ENCODE measurements at regions of chr18 and their contacts with region 1.

Region 1: DNA sequence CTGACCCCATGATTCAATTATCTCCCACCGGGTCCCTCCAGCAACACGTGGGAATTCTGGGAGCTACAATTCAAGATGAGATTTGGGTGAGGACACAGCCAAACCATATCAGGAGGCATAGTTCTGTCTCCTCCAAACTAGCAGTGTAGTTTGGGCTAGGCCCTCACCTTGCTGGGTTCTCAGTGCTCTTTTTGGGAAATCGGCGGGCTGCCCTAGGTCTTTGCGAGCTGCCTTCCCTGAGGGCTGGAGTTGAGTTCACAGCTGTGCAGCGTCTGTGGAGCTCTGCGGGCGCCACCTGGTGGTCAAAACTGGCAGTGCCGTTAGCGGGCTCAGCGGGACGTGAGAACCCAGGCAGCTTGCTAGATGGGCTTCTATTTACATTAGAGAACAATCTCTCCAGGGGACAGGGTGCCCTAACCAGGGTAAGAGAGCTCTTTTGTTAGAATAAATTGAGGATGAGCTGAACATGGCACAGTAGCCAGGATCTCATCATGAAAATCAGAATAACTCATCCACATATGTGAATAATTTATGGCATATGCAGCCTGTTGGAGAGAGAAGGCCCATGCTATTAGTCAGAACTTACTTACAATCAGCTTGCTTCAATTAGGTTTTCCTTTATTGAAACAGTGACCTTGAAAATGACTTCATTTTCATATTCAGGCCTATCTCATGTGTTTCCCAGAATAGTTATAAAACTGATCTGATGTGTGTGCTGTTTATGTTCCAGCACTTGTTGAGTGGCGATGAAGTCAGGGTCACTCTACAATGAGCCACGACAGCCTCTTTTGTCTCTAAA is 27.4 kb upstream of the YES1 start:
- DNase-seq: peak; percentile 49 to 91 (median 82)
- ATAC-seq: peak; percentile 91 to 99 (median 95)
- H3K4me3 ChIP-seq: no peak overlapping the region
- H3K4me3 Mint-ChIP-seq: no peak overlapping the region
- H3K27ac ChIP-seq: no peak overlapping the region
- H3K27ac Mint-ChIP-seq: no peak overlapping the region
- H3K4me1 ChIP-seq: peaks cover 0 to 3% of the 10 kb centered on the region in 2 experiments
- H3K4me1 Mint-ChIP-seq: peaks cover 7 to 8% (median 7%) of the 10 kb centered on the region in 3 donors
- H3K27me3 ChIP-seq: no peaks in the 10 kb centered on the region
- H3K27me3 Mint-ChIP-seq: peaks cover 0 to 1% of the 10 kb centered on the region in 2 donors

Region 2: DNA sequence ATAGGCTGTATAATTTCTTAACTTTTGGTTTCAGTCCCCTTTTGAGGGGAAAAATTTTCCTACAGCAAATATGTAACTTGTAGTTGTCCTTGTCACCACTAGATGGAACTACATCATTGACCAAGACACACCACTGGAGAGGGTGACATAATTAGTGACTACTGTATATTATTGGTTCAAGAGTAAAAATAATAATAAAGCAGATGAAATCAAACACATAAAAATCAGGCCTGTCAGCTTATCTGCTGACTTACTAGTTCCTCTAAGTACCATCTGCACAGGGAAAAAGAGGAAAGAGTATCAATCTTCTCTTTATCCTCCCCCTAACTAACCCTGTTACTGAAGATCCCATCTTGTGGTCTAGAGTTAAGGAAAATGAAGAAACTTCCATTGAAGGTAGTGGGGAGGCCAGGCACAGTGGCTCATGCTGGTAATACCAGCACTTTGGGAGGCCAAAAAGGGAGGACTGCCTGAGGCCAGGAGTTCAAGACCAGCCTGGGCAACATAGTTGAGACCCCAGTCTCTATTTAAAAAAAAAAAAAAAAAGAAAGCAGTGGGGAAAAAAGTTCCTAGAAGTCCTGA is 97.4 kb before region 1 on chr18:
- CTCF ChIA-PET with region 1: interaction called, 67 to 106 read pairs
- POLR2A ChIA-PET with region 1: interaction called in 1 of 2 experiments, 3 read pairs
- DNase-seq: peak in 2 of 35 experiments; percentile 10 to 69
- ATAC-seq: peak; percentile 60 to 76 (median 66)
- H3K4me3 ChIP-seq: no peak overlapping the region
- H3K4me3 Mint-ChIP-seq: no peak overlapping the region
- H3K27ac ChIP-seq: no peak overlapping the region
- H3K27ac Mint-ChIP-seq: peak overlapping the region in 1 of 2 donors; percentile 22
- H3K4me1 ChIP-seq: peaks cover 0 to 2% of the 10 kb centered on the region in 2 experiments
- H3K4me1 Mint-ChIP-seq: peaks cover 0 to 2% (median 0%) of the 10 kb centered on the region in 3 donors
- H3K27me3 ChIP-seq: no peaks in the 10 kb centered on the region
- H3K27me3 Mint-ChIP-seq: no peaks in the 10 kb centered on the region

Region 3: GRCh38 chr18:1222880-1223279 is 383.5 kb after region 1 on chr18:
- CTCF ChIA-PET with region 1: no interaction called
- POLR2A ChIA-PET with region 1: no interaction called
- DNase-seq: no peak
- ATAC-seq: no peak
- H3K4me3 ChIP-seq: no peak overlapping the region
- H3K4me3 Mint-ChIP-seq: no peak overlapping the region
- H3K27ac ChIP-seq: no peak overlapping the region
- H3K27ac Mint-ChIP-seq: no peak overlapping the region
- H3K4me1 ChIP-seq: no peaks in the 10 kb centered on the region
- H3K4me1 Mint-ChIP-seq: no peaks in the 10 kb centered on the region
- H3K27me3 ChIP-seq: no peaks in the 10 kb centered on the region
- H3K27me3 Mint-ChIP-seq: no peaks in the 10 kb centered on the region